Posterior cingulate gyrus (tissue), 11 donors: ENCODE measurements at regions of chr17 and their contacts with region 1.

Region 1: GRCh38 chr17:72338847-72339790 is 218.3 kb downstream of the SOX9 start:
- DNase-seq: no peak

Region 2: DNA sequence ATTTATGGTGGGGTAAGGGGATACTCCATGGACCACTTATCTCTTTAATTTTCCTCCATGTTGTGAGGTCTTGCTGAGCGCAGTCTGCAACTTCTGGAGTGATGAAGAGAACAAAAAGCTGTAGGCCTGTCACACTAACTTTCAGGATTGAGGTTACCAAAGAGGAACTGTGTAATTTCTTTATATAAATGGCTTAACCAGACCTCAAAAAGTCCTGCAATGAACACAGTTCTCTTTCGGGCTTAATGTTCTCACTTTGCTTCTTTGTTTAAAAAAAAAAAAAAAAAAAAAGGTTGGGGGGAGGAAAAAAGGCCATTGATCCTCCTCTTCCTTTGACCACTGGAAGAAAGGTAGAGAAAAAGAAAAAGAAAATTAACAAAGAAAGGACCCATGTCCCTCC is 305.1 kb before region 1 on chr17:
- intact Hi-C with region 1: no loop called
- DNase-seq: no peak

Region 3: DNA sequence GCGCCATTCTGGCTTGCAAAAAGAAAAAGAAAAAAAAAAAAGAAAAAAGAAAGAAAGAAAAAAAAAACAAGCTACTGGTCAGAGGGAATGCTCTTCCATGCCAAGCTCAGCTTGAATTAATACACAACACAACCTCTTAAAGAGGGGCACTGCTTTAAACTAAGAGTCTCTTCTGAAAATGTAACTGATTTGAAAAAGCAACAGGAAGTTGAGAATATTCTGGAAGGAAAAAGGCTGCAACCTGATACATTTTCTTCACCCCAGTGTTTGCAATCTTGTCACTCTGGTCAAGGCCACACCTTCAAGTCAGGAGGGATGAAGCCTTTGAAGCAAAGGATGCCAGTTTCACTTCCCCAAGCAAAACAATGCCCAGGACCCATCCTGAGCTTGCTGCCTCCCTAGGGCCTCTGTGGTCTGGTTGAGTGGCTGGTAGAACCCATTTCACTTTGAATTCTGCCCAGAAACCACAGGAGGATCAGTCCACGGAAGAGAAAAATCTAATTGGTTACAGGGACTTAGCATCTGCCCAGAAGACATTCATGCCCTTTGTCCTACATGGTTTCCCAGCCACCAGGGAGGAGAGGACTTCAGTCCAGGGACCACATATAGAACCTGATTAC is 171.4 kb after region 1 on chr17:
- intact Hi-C with region 1: loop called (anchors 10 kb)
- DNase-seq: no peak